HEK293T (cell line): ENCODE measurements at regions of chr3 and their contacts with region 1.

Region 1: DNA sequence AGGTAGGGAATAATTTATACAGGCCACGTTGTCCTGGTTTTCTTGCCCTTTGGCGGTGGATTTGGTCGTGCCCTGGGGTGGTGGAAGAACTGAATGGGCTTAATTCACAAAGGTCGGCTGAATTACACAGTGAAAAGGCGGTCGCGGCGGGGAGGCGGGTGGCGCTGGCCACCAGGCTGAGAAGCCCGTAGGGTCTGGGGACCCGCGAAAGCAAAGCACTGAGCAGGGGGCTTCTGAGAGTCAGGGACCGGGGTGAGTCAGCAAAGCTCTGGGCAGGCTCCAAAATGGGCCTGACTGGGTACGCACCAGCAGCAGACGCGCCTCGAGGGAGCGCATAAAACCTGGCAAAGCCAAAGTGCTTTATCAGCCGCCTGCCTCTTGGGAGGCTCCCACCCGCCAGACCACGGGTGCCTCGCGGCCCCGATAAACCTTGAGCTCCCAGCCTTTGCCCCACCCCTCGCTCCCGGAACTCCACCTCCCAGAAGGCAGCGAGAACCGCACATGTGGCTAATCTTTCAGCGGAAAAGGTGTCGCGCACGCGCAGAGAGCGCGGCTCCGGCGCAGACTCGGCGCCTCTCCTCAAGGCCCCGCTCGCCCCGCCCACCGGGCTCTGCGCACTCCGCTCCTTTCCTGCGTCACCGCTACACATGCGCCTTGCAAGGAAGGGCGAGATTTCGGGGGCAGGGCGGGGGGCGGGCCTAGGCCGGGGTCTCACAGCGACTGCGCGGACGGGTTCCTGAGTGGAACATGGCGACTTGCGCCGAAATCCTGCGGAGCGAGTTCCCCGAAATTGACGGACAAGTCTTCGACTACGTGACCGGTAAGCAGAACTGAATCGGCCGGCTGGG is at the start of gene ABCF3:
- DNase-seq: peak; percentile 94

Region 2: GRCh38 chr3:184174646-184175492 is 10.8 kb before region 1 on chr3 and contains the start of gene AP2M1:
- CTCF ChIA-PET with region 1: interaction called, 3 read pairs
- POLR2A ChIA-PET with region 1: interaction called, 13 read pairs
- DNase-seq: peak; percentile 88

Region 3: DNA sequence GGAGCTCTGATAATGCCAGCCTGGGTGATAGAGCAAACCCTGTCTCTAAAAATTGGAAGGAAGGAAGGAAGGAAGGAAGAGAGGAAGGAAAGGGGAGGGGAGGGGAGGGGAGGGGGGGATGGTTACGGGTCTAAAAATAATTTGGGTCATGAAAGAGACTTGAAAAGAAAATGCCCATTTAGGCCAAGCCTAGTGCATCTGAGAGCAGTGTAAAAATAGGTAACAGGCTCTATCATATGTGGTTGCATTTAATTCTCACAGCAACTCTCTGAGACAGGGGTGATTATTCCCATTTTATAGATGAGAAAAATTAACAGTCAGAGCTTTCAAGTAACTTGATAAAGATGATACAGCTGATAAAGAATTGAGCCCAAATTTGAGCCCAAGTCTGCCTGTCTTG is 86.6 kb after region 1 on chr3:
- CTCF ChIA-PET with region 1: no interaction called
- POLR2A ChIA-PET with region 1: no interaction called
- DNase-seq: no peak

Region 4: GRCh38 chr3:184469423-184469822 is 283.7 kb after region 1 on chr3:
- CTCF ChIA-PET with region 1: no interaction called
- POLR2A ChIA-PET with region 1: no interaction called
- DNase-seq: peak; percentile 53